Heart left ventricle (tissue), 16 donors: ENCODE measurements at regions of chr3 and their contacts with region 1.

Region 1: DNA sequence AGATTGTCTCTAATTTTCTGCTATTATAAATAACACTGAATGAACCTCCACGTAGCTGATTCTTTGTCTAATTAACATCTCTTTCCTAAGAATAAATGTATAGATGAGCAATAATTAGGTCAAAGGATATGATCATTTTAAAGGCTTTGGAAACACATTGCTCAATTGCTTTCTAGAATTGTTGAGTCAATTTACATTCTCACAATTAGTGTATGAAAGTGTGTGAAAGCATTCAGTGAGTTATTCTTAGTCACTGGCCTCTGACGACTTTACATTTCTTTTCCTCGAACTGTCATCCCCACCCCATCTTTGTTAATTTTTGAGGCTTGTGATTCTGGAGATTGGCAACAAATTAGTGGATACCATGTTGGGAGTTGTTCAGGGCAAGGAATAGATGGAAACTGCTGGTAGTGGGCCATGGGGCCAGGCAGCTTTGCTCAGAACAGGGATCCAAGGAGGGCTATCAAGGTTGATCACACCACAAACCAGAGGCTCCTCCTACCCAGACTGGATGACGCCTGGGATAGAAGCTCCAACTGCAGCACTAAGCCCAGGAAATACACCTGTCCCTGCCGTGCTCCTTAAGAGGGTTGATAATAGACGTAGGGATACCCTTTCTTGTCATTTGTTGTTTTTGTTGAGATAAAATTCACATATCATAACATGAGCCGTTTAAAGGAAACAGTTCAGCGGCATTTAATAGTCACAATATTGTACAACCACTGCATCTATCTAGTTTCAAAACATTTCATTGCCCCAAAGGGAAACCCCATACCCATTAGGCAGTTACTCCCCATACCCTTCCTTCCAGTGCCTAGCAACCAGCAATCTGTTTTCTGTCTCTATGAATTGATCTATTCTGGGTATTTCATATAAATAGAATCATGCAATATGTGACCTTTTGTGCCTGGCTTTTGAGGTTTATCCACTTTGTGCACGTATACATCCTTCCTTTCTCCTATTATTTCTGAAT is 27.9 kb downstream of the EIF1B start:
- DNase-seq: no peak
- ATAC-seq: no peak
- H3K4me3 ChIP-seq: no peak overlapping the region
- H3K27ac ChIP-seq: no peak overlapping the region
- H3K4me1 ChIP-seq: peaks cover 0 to 10% (median 0%) of the 10 kb centered on the region in 12 donors
- H3K27me3 ChIP-seq: no peaks in the 10 kb centered on the region
- CTCF ChIP-seq: no peak
- POLR2A ChIP-seq: no peak

Region 2: DNA sequence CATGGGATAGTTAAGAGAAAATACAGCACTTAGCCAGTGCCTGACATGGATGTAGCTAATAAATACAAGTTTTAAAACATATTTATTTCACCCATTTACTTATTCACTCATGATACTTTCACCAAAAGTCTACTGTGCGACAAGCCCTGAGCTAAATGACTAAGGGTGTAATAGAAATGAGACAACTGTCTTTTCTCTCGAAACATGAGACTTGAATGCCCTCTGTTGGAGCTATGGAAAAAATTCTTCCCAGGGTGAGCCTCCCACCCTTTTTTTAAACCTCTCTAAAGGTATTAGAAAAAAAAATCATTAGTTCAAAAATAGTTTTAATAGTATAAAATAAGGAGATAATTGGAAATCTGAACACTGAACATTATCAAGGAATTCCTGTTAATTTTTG is 95.4 kb after region 1 on chr3:
- intact Hi-C with region 1: loop called in 3 of 10 experiments (anchors 5 to 10 kb)
- DNase-seq: no peak
- ATAC-seq: no peak
- H3K4me3 ChIP-seq: no peak overlapping the region
- H3K27ac ChIP-seq: no peak overlapping the region
- H3K4me1 ChIP-seq: no peaks in the 10 kb centered on the region
- H3K27me3 ChIP-seq: no peaks in the 10 kb centered on the region
- CTCF ChIP-seq: peak in 3 of 12 donors; percentile 9 to 21 (median 18)
- POLR2A ChIP-seq: no peak

Region 3: DNA sequence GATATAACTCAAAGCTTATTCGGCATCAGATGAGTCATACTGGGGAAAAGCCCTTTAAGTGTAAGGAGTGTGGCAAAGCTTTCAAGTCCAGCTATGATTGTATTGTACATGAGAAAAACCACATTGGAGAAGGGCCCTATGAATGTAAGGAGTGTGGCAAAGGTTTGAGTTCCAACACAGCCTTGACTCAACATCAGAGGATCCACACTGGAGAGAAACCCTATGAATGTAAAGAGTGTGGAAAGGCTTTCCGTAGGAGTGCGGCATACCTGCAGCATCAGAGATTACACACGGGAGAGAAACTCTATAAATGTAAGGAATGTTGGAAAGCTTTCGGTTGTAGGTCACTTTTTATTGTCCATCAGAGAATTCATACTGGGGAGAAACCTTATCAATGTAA is 194.8 kb after region 1 on chr3:
- intact Hi-C with region 1: loop called in 1 of 10 experiments (anchors 10 kb)
- DNase-seq: no peak
- ATAC-seq: no peak
- H3K4me3 ChIP-seq: no peak overlapping the region
- H3K27ac ChIP-seq: no peak overlapping the region
- H3K4me1 ChIP-seq: no peaks in the 10 kb centered on the region
- H3K27me3 ChIP-seq: no peaks in the 10 kb centered on the region
- CTCF ChIP-seq: no peak
- POLR2A ChIP-seq: no peak

Region 4: DNA sequence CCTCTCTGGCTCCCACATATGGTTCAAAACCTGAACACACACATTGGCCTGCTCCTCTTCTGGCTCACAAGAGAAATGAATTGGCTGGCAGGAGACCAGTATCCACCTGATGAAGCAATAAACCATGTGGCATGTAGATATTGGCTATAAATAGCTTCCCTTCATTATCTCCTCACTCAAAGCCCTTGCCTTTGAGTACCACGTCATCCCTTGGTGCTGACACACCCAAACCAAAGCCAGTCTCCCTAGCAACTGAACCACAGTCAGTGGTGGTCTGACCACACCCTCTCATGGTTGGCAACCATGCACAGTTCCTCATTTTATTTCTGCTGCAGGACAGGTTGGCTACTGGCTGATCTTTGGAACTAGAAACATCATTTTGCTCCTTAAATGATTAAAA is 286.1 kb after region 1 on chr3:
- intact Hi-C with region 1: no loop called
- DNase-seq: peak in 3 of 5 donors; percentile 19 to 48 (median 44)
- ATAC-seq: peak; percentile 36 to 93 (median 72)
- H3K4me3 ChIP-seq: no peak overlapping the region
- H3K27ac ChIP-seq: no peak overlapping the region
- H3K4me1 ChIP-seq: peaks cover 0 to 6% (median 0%) of the 10 kb centered on the region in 12 donors
- H3K27me3 ChIP-seq: no peaks in the 10 kb centered on the region
- CTCF ChIP-seq: no peak
- POLR2A ChIP-seq: no peak

Region 5: GRCh38 chr3:41111016-41111415 is 773.6 kb after region 1 on chr3:
- intact Hi-C with region 1: loop called in 1 of 10 experiments (anchors 5 kb)
- DNase-seq: no peak
- ATAC-seq: peak in 2 of 4 donors; percentile 18 to 33
- H3K4me3 ChIP-seq: no peak overlapping the region
- H3K27ac ChIP-seq: no peak overlapping the region
- H3K4me1 ChIP-seq: no peaks in the 10 kb centered on the region
- H3K27me3 ChIP-seq: peaks cover 0 to 2% (median 0%) of the 10 kb centered on the region in 9 donors
- CTCF ChIP-seq: no peak
- POLR2A ChIP-seq: no peak

Region 6: GRCh38 chr3:41881233-41881821 is 1543.9 kb after region 1 on chr3:
- intact Hi-C with region 1: loop called in 1 of 10 experiments (anchors 10 kb)
- DNase-seq: no peak
- ATAC-seq: no peak
- H3K4me3 ChIP-seq: no peak overlapping the region
- H3K27ac ChIP-seq: no peak overlapping the region
- H3K4me1 ChIP-seq: no peaks in the 10 kb centered on the region
- H3K27me3 ChIP-seq: no peaks in the 10 kb centered on the region
- CTCF ChIP-seq: peak; percentile 60 to 81 (median 73)
- POLR2A ChIP-seq: no peak